ENCODE measurements at regions of chr20 and their contacts with region 1.

Region 1: GRCh38 chr20:33791959-33792597 is 19.1 kb upstream of the CHMP4B start:
- DNase-seq: peak; percentile 68
- CTCF ChIP-seq: peak; percentile 73

Region 2: GRCh38 chr20:33450867-33451266 is 341.2 kb before region 1 on chr20:
- CTCF ChIA-PET with region 1: no interaction called
- POLR2A ChIA-PET with region 1: no interaction called
- DNase-seq: no peak
- CTCF ChIP-seq: no peak

Region 3: GRCh38 chr20:33781133-33781532 is 10.9 kb before region 1 on chr20:
- CTCF ChIA-PET with region 1: interaction called, 22 read pairs
- POLR2A ChIA-PET with region 1: no interaction called
- DNase-seq: no peak
- CTCF ChIP-seq: no peak

Region 4: GRCh38 chr20:33803921-33804337 is 11.9 kb after region 1 on chr20:
- CTCF ChIA-PET with region 1: interaction called, 10 read pairs
- POLR2A ChIA-PET with region 1: no interaction called
- DNase-seq: no peak
- CTCF ChIP-seq: no peak

Region 5: GRCh38 chr20:33810885-33811777 is 19.1 kb after region 1 on chr20 and contains the start of gene CHMP4B:
- CTCF ChIA-PET with region 1: interaction called, 10 read pairs
- POLR2A ChIA-PET with region 1: interaction called, 8 read pairs
- DNase-seq: peak; percentile 98
- CTCF ChIP-seq: no peak

Region 6: GRCh38 chr20:34083137-34083536 is 291.1 kb after region 1 on chr20:
- CTCF ChIA-PET with region 1: no interaction called
- POLR2A ChIA-PET with region 1: no interaction called
- DNase-seq: no peak
- CTCF ChIP-seq: no peak

Measured in GM10248 (cell line).